ENCODE measurements at regions of chr9 and their contacts with region 1.

Region 1: DNA sequence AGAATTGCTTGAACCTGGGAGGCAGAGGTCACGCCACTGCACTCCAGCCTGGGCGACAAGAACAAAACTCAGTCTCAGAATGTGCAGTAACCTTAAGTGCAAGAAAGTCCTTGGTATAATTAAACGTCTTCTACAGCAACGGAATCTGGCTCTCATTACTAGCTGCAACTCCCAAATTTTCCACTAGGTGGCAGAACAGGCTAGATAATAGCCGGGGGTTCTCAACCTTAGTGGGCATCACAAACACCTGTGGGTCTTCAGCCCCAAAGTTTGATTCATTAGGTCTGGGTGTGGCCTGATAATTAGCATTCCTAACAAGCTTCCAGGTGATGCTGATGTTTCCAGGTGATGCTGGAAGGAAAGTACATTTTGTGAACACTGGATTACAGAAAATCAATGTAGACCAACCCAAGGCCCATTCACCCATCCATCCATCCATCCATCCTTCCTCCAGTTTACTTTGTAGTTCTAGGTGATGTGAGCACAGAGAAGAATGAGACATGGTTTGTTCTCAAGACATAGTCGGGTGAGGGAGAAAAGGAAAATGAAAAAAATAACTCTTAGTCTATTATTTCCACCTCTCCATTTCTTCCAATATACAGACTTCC is 37.3 kb downstream of the FBXW2 start:
- DNase-seq: peak in 4 of 10 donors; percentile 17 to 60 (median 57)
- H3K4me3 ChIP-seq: no peak overlapping the region
- H3K27ac ChIP-seq: peak overlapping the region in 14 of 59 donors; percentile 3 to 62 (median 30)
- H3K27me3 ChIP-seq: no peaks in the 10 kb centered on the region
- CTCF ChIP-seq: peak; percentile 71 to 95 (median 90)

Region 2: DNA sequence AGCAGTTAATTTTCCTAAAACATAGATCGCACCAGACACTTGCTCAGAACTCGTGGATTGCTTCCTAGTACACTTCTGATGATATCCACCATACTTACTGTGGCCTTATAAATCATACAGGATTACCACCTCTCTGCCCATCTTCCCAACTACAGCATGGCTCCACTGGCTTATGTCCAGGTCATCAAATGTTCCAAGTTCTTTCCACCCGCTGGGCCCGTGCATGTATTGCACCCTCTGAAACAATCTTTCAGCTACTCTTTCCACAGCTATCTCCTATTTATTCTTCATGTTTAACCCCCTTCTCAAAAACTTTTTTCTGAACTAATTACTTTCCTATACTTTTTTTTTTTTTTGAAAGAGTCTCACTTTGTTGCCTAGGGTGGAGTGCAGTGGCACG is 18.8 kb after region 1 on chr9:
- intact Hi-C with region 1: no loop called
- DNase-seq: no peak
- H3K4me3 ChIP-seq: no peak overlapping the region
- H3K27ac ChIP-seq: no peak overlapping the region
- H3K27me3 ChIP-seq: no peaks in the 10 kb centered on the region
- CTCF ChIP-seq: no peak

Region 3: GRCh38 chr9:120868676-120869359 is 112.9 kb after region 1 on chr9:
- intact Hi-C with region 1: no loop called
- DNase-seq: peak; percentile 47 to 91 (median 89)
- H3K4me3 ChIP-seq: peak overlapping the region; percentile 38 to 78 (median 59)
- H3K27ac ChIP-seq: peak overlapping the region; percentile 23 to 95 (median 86)
- H3K27me3 ChIP-seq: no peaks in the 10 kb centered on the region
- CTCF ChIP-seq: peak in 49 of 56 donors; percentile 13 to 71 (median 47)

Region 4: GRCh38 chr9:120936011-120936763 is 180.3 kb after region 1 on chr9:
- intact Hi-C with region 1: loop called (anchors 5 kb)
- DNase-seq: peak; percentile 87 to 93 (median 90)
- H3K4me3 ChIP-seq: peak overlapping the region in 10 of 59 donors; percentile 0 to 25 (median 14)
- H3K27ac ChIP-seq: peak overlapping the region; percentile 57 to 95 (median 88)
- H3K27me3 ChIP-seq: no peaks in the 10 kb centered on the region
- CTCF ChIP-seq: peak; percentile 72 to 97 (median 92)

Region 5: GRCh38 chr9:121059998-121060636 is 304.2 kb after region 1 on chr9:
- intact Hi-C with region 1: loop called in 1 of 2 experiments (anchors 5 kb)
- DNase-seq: peak in 1 of 10 donors; percentile 39
- H3K4me3 ChIP-seq: peak overlapping the region in 19 of 59 donors; percentile 9 to 43 (median 26)
- H3K27ac ChIP-seq: no peak overlapping the region
- H3K27me3 ChIP-seq: no peaks in the 10 kb centered on the region
- CTCF ChIP-seq: peak; percentile 60 to 90 (median 77)